Tibial artery (tissue), 4 donors: ENCODE measurements at regions of chr16 and their contacts with region 1.

Region 1: GRCh38 chr16:57091975-57092785 is at the start of gene CPNE2:
- DNase-seq: peak; percentile 51 to 84
- H3K4me3 ChIP-seq: peak within 1 kb of the TSS; percentile 59 to 95
- H3K27ac ChIP-seq: peak within 1 kb of the TSS; percentile 92 to 93
- H3K4me1 ChIP-seq: peaks cover 0 to 32% (median 23%) of the 10 kb centered on the region in 4 donors
- H3K27me3 ChIP-seq: no peaks in the 10 kb centered on the region
- CTCF ChIP-seq: no peak

Region 2: DNA sequence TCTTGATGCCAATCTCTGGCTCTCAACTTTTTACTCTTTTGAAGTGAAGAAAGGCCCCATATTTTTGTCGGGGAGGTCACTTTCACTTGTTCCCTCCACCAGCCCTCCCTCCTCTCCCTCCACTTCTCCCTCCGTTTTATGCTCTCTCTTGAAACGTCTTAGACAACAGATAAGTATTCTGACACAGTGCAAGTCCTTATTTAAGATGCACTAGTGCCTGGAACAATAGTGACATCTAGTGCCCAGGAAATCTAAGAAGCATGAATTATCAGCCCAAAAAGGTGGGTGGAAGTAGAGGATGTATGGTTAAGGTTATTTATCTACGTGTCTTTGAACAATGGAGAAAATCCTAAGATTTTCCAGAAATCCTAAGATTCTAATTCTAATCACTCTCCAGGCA is 75.8 kb after region 1 on chr16:
- intact Hi-C with region 1: loop called (anchors 5 kb)
- DNase-seq: no peak
- H3K4me3 ChIP-seq: no peak overlapping the region
- H3K27ac ChIP-seq: no peak overlapping the region
- H3K4me1 ChIP-seq: no peaks in the 10 kb centered on the region
- H3K27me3 ChIP-seq: no peaks in the 10 kb centered on the region
- CTCF ChIP-seq: peak; percentile 46 to 53

Region 3: DNA sequence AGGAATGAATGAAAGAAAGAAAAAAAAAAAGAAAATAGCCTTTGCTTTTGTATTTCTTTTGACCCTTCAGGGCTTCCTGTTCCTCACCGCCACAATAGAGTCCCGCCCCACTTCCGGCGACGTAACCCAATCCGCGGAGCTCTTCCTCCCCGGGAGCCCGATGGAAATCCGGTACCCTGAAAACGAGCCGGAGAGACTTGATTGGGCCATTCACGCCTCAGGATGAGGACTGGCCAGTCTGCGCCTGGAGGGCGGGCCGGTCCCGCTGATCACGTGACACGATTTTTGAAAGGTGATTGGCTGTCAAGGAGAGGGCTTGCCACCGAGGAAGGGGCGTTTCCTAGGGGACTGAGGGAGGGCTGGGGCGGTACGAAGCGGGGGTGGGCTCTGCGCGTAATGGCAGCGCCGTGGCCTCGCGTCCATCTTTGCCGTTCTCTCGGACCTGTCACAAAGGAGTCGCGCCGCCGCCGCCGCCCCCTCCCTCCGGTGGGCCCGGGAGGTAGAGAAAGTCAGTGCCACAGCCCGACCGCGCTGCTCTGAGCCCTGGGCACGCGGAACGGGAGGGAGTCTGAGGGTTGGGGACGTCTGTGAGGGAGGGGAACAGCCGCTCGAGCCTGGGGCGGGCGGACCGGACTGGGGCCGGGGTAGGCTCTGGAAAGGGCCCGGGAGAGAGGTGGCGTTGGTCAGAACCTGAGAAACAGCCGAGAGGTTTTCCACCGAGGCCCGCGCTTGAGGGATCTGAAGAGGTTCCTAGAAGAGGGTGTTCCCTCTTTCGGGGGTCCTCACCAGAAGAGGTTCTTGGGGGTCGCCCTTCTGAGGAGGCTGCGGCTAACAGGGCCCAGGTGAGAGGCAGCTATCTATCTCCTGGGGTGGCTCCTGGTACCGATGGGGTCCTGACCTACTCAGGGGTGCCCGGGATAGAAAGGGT is 94.0 kb after region 1 on chr16 and contains the starts of genes PSME3IP1 and RSPRY1:
- intact Hi-C with region 1: loop called (anchors 2 kb)
- DNase-seq: peak; percentile 98 to 99
- H3K4me3 ChIP-seq: peak within 1 kb of the TSS; percentile 76 to 96
- H3K27ac ChIP-seq: peak within 1 kb of the TSS; percentile 97 to 98
- H3K4me1 ChIP-seq: peaks cover 0 to 46% (median 31%) of the 10 kb centered on the region in 4 donors
- H3K27me3 ChIP-seq: no peaks in the 10 kb centered on the region
- CTCF ChIP-seq: no peak

Region 4: DNA sequence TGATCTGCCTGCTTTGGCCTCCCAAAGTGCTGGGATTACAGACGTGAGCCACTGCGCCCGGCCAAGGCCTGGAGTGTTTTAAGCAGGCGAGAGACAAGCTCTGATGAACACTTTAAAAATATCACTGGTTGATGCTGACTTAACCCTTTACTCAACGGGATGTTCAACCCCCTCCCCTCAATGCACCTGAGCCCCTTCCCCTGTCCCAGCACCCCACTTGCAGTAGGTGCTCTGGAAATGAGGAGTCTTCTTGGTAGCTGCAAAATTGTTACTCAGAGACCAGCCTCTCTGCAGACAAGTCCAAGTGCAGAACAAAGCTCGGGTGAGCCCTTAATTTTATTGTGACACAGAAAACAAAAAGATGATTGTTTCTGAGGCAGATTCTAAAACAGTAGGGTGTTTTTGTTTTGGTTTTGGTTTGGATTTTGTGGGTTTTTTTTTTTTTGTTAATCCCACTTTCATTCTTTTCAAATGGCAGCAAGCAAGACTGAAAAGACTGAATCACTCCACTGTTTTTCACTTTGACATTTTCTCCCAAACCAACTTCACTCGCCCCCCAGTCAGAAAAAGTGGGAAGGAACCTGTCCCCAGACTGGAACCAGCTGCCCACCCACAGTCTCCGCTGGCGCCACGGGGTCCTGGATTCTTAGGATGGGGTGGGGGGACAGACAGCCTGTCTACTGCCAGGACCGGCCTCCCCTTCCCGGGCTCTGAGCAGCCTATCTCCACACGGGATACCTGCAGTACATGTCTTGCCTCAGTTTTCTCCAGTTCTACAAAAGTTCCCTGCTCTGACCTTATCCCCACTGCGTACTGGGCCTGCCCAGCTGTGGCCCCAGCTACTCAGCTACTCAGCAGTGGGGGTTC is 197.4 kb after region 1 on chr16:
- intact Hi-C with region 1: loop called (anchors 5 kb)
- DNase-seq: no peak
- H3K4me3 ChIP-seq: no peak overlapping the region
- H3K27ac ChIP-seq: no peak overlapping the region
- H3K4me1 ChIP-seq: peaks cover 0 to 7% (median 6%) of the 10 kb centered on the region in 4 donors
- H3K27me3 ChIP-seq: peaks cover 0 to 7% of the 10 kb centered on the region in 2 donors
- CTCF ChIP-seq: no peak

Region 5: GRCh38 chr16:57422026-57422944 is 330.1 kb after region 1 on chr16:
- intact Hi-C with region 1: loop called (anchors 5 kb)
- DNase-seq: peak; percentile 65 to 81
- H3K4me3 ChIP-seq: no peak overlapping the region
- H3K27ac ChIP-seq: peak overlapping the region; percentile 8 to 31
- H3K4me1 ChIP-seq: peaks cover 7 to 38% (median 22%) of the 10 kb centered on the region in 4 donors
- H3K27me3 ChIP-seq: no peaks in the 10 kb centered on the region
- CTCF ChIP-seq: peak; percentile 75 to 78